ENCODE measurements at regions of chr5 and their contacts with region 1.

Region 1: DNA sequence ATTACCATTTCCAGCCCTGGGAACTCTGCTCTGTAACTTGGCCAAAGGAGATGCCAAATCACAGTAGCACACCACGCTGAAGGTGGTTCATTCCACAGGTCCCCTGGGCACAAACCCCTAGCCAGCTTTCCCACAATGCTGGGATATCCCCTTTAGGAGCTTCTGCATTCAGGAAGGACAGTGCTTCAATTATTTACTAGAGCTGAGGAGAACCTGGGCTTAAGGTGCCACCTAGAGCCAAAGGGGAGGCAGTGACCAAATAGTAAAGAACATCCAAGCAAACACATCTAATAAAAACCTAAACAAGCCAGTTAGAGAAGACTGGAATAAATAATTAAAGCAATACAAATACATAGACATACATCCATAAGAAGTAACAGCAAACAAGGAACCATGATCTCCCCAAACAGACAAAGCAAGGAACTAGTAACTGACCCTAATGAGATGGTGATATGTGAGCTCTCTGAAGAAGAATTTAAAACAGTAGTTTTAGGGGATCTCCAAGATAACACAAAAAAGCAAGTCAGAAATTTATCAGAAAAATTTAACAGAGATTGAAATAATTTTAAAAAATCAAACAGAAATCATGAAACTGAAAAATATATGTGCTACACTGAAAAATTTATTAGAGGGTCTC is 14.6 kb downstream of the KIF4B start:
- DNase-seq: peak; percentile 20
- H3K4me3 ChIP-seq: no peak overlapping the region
- H3K27ac ChIP-seq: no peak overlapping the region
- H3K4me1 ChIP-seq: no peaks in the 10 kb centered on the region
- H3K27me3 ChIP-seq: no peaks in the 10 kb centered on the region
- CTCF ChIP-seq: peak; percentile 40 to 56

Region 2: GRCh38 chr5:154421868-154422267 is 606.2 kb before region 1 on chr5:
- CTCF ChIA-PET with region 1: no interaction called
- dilution Hi-C with region 1: no loop called
- in situ Hi-C with region 1: no loop called
- intact Hi-C with region 1: no loop called
- DNase-seq: no peak
- H3K4me3 ChIP-seq: no peak overlapping the region
- H3K27ac ChIP-seq: no peak overlapping the region
- H3K4me1 ChIP-seq: no peaks in the 10 kb centered on the region
- H3K27me3 ChIP-seq: no peaks in the 10 kb centered on the region
- CTCF ChIP-seq: peak; percentile 28 to 42

Region 3: DNA sequence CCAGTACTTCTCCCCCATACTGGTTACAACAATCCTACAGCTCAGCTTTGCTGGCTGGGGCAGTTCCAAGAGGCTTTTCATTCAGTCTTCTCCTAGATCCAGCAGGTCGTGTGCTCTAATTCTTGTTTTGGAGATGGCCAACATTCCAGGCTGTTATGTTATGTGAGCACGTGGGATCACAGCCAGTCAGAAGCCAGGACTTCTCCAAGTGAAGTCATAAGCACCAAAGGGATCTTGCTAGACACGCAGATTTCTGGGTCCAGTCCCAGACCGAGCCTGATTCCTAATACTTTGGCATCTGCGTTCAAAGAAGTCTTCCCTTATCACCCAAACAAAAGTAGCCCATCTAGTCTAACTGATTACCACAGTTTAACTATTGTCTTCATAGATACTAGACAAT is 274.3 kb before region 1 on chr5:
- CTCF ChIA-PET with region 1: no interaction called
- dilution Hi-C with region 1: no loop called
- in situ Hi-C with region 1: no loop called
- intact Hi-C with region 1: no loop called
- DNase-seq: no peak
- H3K4me3 ChIP-seq: peak overlapping the region in 1 of 3 experiments; percentile 60
- H3K27ac ChIP-seq: peak overlapping the region; percentile 83
- H3K4me1 ChIP-seq: peaks cover 22% of the 10 kb centered on the region
- H3K27me3 ChIP-seq: no peaks in the 10 kb centered on the region
- CTCF ChIP-seq: no peak

Region 4: DNA sequence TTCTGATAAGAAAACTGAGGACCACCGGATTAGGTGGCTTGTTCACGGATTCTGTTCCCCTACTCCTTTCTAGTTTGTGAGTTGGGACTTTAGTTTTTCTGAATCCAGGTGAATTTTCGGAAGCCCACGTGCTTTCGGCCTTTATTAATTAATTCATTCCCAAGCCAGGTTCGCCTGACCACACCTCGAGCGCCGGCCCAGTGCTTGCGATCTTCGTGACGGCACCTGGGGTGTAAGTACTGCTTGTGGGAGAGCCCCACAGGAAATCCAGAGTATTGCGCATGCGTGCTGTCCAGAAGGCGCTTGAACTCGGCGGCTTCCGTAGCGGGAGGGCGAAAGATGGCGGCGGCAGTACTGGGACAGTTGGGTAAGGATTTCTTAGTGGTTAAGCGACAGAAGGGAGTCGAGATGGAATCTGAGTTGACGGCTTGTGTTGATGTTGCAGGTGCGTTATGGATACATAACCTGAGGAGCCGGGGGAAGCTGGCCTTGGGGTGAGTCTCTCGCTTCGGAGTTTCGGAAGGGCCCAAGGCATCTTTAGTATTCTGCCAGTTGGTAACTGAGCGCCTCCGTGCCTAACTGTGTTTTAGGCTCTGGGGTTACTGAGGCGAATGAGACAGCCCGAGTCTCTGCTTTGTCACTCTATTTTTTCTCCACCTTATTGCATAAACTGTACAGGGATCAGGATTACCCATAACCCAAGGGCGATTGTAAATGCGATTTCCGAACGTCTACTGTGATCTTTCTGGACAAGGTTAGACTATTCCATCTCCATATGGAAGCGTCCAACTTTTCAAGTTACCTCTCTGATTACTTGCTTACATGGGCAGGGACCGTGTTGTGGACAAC is 87.1 kb before region 1 on chr5 and contains the start of gene MRPL22:
- CTCF ChIA-PET with region 1: no interaction called
- dilution Hi-C with region 1: no loop called
- in situ Hi-C with region 1: no loop called
- intact Hi-C with region 1: loop called (anchors 1 kb)
- DNase-seq: peak; percentile 91
- H3K4me3 ChIP-seq: peak within 1 kb of the TSS; percentile 66 to 94 (median 84)
- H3K27ac ChIP-seq: peak within 1 kb of the TSS; percentile 81
- H3K4me1 ChIP-seq: peaks cover 22% of the 10 kb centered on the region
- H3K27me3 ChIP-seq: no peaks in the 10 kb centered on the region
- CTCF ChIP-seq: no peak
- total RNA-seq, gene MRPL22: 7.7 to 58.1 TPM

Region 5: DNA sequence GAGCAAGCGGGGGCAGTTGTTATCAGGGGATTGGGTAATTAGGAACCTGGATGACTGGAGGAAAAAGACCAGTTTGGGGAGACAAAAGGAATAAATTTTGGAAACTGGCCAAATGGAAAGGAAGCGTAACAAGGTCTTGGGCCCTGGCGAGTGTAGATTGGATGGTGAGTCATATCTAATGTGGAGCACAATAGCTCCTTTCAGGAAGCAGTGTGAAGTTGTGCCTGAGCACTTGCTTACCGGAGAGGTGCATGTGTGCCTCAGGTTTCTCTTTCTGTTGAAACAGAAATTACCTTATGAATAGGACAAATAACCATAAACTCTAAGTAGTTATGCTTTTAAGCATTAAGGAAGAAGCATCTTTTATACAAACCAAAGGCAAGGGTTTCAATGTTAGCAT is 161.9 kb after region 1 on chr5:
- CTCF ChIA-PET with region 1: no interaction called
- dilution Hi-C with region 1: no loop called
- in situ Hi-C with region 1: no loop called
- intact Hi-C with region 1: no loop called
- DNase-seq: peak; percentile 73
- H3K4me3 ChIP-seq: no peak overlapping the region
- H3K27ac ChIP-seq: no peak overlapping the region
- H3K4me1 ChIP-seq: no peaks in the 10 kb centered on the region
- H3K27me3 ChIP-seq: peaks cover 6% of the 10 kb centered on the region
- CTCF ChIP-seq: no peak

Measured in mammary epithelial cell (primary cell).